Activated T-helper 1 cell treated with anti-CD3 and anti-CD28 coated beads, Interleukin-12 subunit alpha, Interleukin-12 subunit beta, Interleukin-2, Interleukin-4 antibody, amounts not matched to agents 30 ng/mL and 10 ng/mL and 1 ng/mL, durations not matched to agents 14 hours and 24 hours and 36 hours (primary cell): ENCODE measurements at regions of chr11 and their contacts with region 1.

Region 1: GRCh38 chr11:67118801-67119584 is at the start of gene KDM2A:
- DNase-seq: peak; percentile 95
- H3K4me3 Mint-ChIP-seq: peak within 1 kb of the TSS; percentile 99
- H3K27ac Mint-ChIP-seq: peak within 1 kb of the TSS; percentile 92
- H3K4me1 Mint-ChIP-seq: peaks cover 23% of the 10 kb centered on the region
- H3K27me3 Mint-ChIP-seq: peaks cover 12% of the 10 kb centered on the region
- total RNA-seq, gene KDM2A: 114 and 119 TPM in 2 replicates

Region 2: DNA sequence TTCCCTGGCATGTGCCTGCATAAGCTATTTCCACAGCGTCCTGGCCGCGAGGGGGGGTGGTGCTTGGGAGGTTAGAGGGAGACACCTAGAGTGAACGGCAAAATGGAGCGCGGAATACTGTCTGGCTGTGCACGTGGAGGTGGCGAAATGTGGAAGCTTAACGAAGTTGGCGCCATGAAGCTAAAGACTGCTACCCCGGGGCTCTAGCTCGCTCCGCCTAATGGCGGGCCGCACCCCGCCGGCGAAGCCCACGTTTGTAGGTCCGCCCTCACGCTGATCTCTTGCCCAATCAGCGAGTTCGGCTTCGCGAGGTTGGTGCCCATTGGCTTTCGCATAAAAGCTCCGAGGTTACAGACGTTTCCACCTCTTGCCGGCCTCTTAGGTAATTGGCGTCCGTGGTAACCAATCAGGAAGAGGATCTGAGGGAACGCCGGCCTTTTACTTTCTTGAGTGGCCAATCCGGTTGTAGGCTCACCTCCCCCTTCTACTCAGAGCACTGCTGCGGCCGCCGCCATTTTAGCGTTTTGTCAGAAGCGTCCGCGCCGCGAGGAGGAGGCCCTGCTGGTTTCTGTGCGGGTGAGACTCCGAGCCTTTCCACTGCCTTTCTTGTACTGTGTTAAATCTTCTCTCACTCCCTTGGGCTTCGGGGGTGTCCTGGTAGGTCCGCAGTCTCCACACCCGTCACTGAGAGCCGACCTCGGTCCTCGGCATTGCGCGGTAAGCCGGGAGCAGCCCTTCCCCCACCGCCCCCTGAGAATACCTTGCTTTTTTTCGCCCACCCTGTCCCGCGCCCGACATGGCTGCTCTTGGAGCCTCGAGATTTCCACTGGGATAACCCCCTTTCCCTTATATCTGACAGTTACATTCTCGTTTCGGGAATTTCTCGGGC is 480.6 kb before region 1 on chr11 and contains the start of gene RBM4:
- intact Hi-C with region 1: loop called (anchors 5 kb)
- DNase-seq: peak; percentile 97
- H3K4me3 Mint-ChIP-seq: peak within 1 kb of the TSS; percentile 96
- H3K27ac Mint-ChIP-seq: peak within 1 kb of the TSS; percentile 96
- H3K4me1 Mint-ChIP-seq: peaks cover 68% of the 10 kb centered on the region
- H3K27me3 Mint-ChIP-seq: no peaks in the 10 kb centered on the region
- total RNA-seq, gene RBM4: 131 and 133 TPM in 2 replicates

Region 3: GRCh38 chr11:66958232-66958955 is 160.6 kb before region 1 on chr11 and contains the start of gene PC:
- intact Hi-C with region 1: loop called (anchors 2 kb)
- DNase-seq: peak; percentile 97
- H3K4me3 Mint-ChIP-seq: peak within 1 kb of the TSS; percentile 83
- H3K27ac Mint-ChIP-seq: peak within 1 kb of the TSS; percentile 90
- H3K4me1 Mint-ChIP-seq: peaks cover 29% of the 10 kb centered on the region
- H3K27me3 Mint-ChIP-seq: peaks cover 16% of the 10 kb centered on the region
- total RNA-seq, gene PC: 11.2 and 15.9 TPM in 2 replicates

Region 4: GRCh38 chr11:67053896-67054842 is 64.8 kb before region 1 on chr11:
- intact Hi-C with region 1: no loop called
- DNase-seq: peak; percentile 24
- H3K4me3 Mint-ChIP-seq: no peak overlapping the region
- H3K27ac Mint-ChIP-seq: no peak overlapping the region
- H3K4me1 Mint-ChIP-seq: peaks cover 10% of the 10 kb centered on the region
- H3K27me3 Mint-ChIP-seq: peaks cover 18% of the 10 kb centered on the region

Region 5: GRCh38 chr11:67160874-67161783 is 42.1 kb after region 1 on chr11:
- intact Hi-C with region 1: loop called (anchors 1 kb)
- DNase-seq: no peak
- H3K4me3 Mint-ChIP-seq: no peak overlapping the region
- H3K27ac Mint-ChIP-seq: peak overlapping the region; percentile 23
- H3K4me1 Mint-ChIP-seq: peaks cover 43% of the 10 kb centered on the region
- H3K27me3 Mint-ChIP-seq: no peaks in the 10 kb centered on the region

Region 6: GRCh38 chr11:67317205-67317887 is 198.4 kb after region 1 on chr11:
- intact Hi-C with region 1: loop called (anchors 1 kb)
- DNase-seq: peak; percentile 98
- H3K4me3 Mint-ChIP-seq: peak overlapping the region; percentile 94
- H3K27ac Mint-ChIP-seq: peak overlapping the region; percentile 100
- H3K4me1 Mint-ChIP-seq: peaks cover 39% of the 10 kb centered on the region
- H3K27me3 Mint-ChIP-seq: peaks cover 4% of the 10 kb centered on the region

Region 7: GRCh38 chr11:67416416-67417335 is 297.7 kb after region 1 on chr11:
- intact Hi-C with region 1: no loop called
- DNase-seq: no peak
- H3K4me3 Mint-ChIP-seq: no peak overlapping the region
- H3K27ac Mint-ChIP-seq: peak overlapping the region; percentile 15
- H3K4me1 Mint-ChIP-seq: peaks cover 33% of the 10 kb centered on the region
- H3K27me3 Mint-ChIP-seq: peaks cover 20% of the 10 kb centered on the region

Region 8: GRCh38 chr11:68223275-68223674 is 1104.3 kb after region 1 on chr11:
- intact Hi-C with region 1: no loop called
- DNase-seq: no peak
- H3K4me3 Mint-ChIP-seq: no peak overlapping the region
- H3K27ac Mint-ChIP-seq: no peak overlapping the region
- H3K4me1 Mint-ChIP-seq: no peaks in the 10 kb centered on the region
- H3K27me3 Mint-ChIP-seq: peaks cover 7% of the 10 kb centered on the region